GM12878 (cell line): ENCODE measurements at regions of chr13 and their contacts with region 1.

Region 1: GRCh38 chr13:80454245-80454644 is 113.3 kb upstream of the SPRY2 start:
- DNase-seq: peak; percentile 34
- ATAC-seq: peak; percentile 85
- H3K4me3 ChIP-seq: no peak overlapping the region
- H3K27ac ChIP-seq: no peak overlapping the region
- H3K4me1 ChIP-seq: no peaks in the 10 kb centered on the region
- H3K27me3 ChIP-seq: no peaks in the 10 kb centered on the region
- CTCF ChIP-seq: no peak
- EP300 ChIP-seq: peak; percentile 88 to 92
- POLR2A ChIP-seq: no peak
- RAD21 ChIP-seq: no peak

Region 2: GRCh38 chr13:80224468-80224867 is 229.8 kb before region 1 on chr13:
- CTCF ChIA-PET with region 1: no interaction called
- POLR2A ChIA-PET with region 1: no interaction called
- RAD21 ChIA-PET with region 1: no interaction called
- SMC1A ChIA-PET with region 1: no interaction called
- in situ Hi-C with region 1: no loop called
- intact Hi-C with region 1: no loop called
- DNase-seq: no peak
- ATAC-seq: no peak
- H3K4me3 ChIP-seq: no peak overlapping the region
- H3K27ac ChIP-seq: no peak overlapping the region
- H3K4me1 ChIP-seq: no peaks in the 10 kb centered on the region
- H3K27me3 ChIP-seq: no peaks in the 10 kb centered on the region
- CTCF ChIP-seq: no peak
- EP300 ChIP-seq: no peak
- POLR2A ChIP-seq: no peak
- RAD21 ChIP-seq: no peak

Region 3: DNA sequence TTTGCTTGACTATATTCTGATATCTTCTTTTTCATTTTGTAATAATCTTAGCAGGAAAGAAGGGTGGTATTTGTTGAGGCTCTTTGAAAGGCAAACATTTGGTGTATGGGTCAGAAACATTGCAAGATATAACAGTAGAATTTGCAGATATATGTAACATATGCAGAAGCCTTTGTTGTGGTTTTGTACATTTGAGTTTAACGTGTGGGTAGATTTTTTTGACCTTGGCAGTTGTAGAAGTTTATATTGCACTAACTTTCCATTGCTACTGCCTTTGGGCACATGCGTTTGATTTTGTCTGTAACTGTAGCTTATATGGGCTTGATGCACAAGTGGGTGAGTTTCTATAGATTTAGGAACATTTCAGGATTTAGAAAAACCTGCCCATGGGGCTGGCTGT is 34.8 kb before region 1 on chr13:
- CTCF ChIA-PET with region 1: interaction called, 4 read pairs
- POLR2A ChIA-PET with region 1: interaction called, 5 read pairs
- RAD21 ChIA-PET with region 1: interaction called, 67 read pairs
- SMC1A ChIA-PET with region 1: interaction called, 707 read pairs
- in situ Hi-C with region 1: no loop called
- intact Hi-C with region 1: no loop called
- DNase-seq: no peak
- ATAC-seq: peak; percentile 63
- H3K4me3 ChIP-seq: no peak overlapping the region
- H3K27ac ChIP-seq: no peak overlapping the region
- H3K4me1 ChIP-seq: no peaks in the 10 kb centered on the region
- H3K27me3 ChIP-seq: no peaks in the 10 kb centered on the region
- CTCF ChIP-seq: no peak
- EP300 ChIP-seq: no peak
- POLR2A ChIP-seq: no peak
- RAD21 ChIP-seq: no peak

Region 4: DNA sequence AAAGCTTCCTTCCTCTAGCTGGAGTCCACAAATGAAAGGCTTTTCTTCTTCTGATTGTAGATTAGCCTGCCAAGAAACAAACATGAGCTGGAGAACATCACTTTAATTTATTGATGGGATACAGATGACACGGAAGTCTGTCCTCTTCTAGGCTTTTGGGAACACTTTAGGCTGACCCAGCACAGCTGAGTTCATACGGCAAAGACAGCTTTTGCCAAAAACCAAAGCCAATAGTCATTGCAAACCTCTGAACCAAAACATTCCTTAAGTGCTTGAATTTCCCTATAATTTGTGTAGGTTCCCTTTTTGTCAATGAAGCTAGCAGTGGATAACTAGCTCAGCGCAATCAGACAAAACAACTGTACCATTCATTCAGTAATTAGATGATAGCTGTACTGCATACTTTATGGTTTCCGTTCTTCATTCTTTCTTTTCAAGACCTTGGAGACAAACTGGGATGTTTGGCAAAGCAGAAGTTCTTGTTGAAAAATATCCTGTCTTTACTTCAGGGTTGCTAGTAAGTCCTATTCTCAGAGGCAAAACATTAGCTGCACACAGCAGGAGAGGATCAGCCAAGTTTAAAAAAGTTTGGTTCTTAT is 17.6 kb before region 1 on chr13:
- CTCF ChIA-PET with region 1: interaction called, 5 read pairs
- POLR2A ChIA-PET with region 1: interaction called, 11 read pairs
- RAD21 ChIA-PET with region 1: interaction called, 27 read pairs
- SMC1A ChIA-PET with region 1: interaction called, 31 read pairs
- in situ Hi-C with region 1: no loop called
- intact Hi-C with region 1: no loop called
- DNase-seq: no peak
- ATAC-seq: no peak
- H3K4me3 ChIP-seq: no peak overlapping the region
- H3K27ac ChIP-seq: no peak overlapping the region
- H3K4me1 ChIP-seq: no peaks in the 10 kb centered on the region
- H3K27me3 ChIP-seq: no peaks in the 10 kb centered on the region
- CTCF ChIP-seq: no peak
- EP300 ChIP-seq: no peak
- POLR2A ChIP-seq: no peak
- RAD21 ChIP-seq: no peak

Region 5: GRCh38 chr13:80469853-80470381 is 15.7 kb after region 1 on chr13:
- CTCF ChIA-PET with region 1: no interaction called
- POLR2A ChIA-PET with region 1: interaction called, 3 read pairs
- RAD21 ChIA-PET with region 1: interaction called, 22 read pairs
- SMC1A ChIA-PET with region 1: interaction called, 209 read pairs
- in situ Hi-C with region 1: no loop called
- intact Hi-C with region 1: no loop called
- DNase-seq: no peak
- ATAC-seq: no peak; the same call in 2 of the 3 replicates
- H3K4me3 ChIP-seq: no peak overlapping the region
- H3K27ac ChIP-seq: no peak overlapping the region
- H3K4me1 ChIP-seq: no peaks in the 10 kb centered on the region
- H3K27me3 ChIP-seq: no peaks in the 10 kb centered on the region
- CTCF ChIP-seq: no peak
- EP300 ChIP-seq: no peak
- POLR2A ChIP-seq: no peak
- RAD21 ChIP-seq: no peak

Region 6: GRCh38 chr13:80477661-80478443 is 23.6 kb after region 1 on chr13:
- CTCF ChIA-PET with region 1: interaction called, 12 read pairs
- POLR2A ChIA-PET with region 1: interaction called, 3 read pairs
- RAD21 ChIA-PET with region 1: interaction called, 22 read pairs
- SMC1A ChIA-PET with region 1: interaction called, 209 read pairs
- in situ Hi-C with region 1: no loop called
- intact Hi-C with region 1: no loop called
- DNase-seq: no peak
- ATAC-seq: peak; percentile 80
- H3K4me3 ChIP-seq: no peak overlapping the region
- H3K27ac ChIP-seq: no peak overlapping the region
- H3K4me1 ChIP-seq: no peaks in the 10 kb centered on the region
- H3K27me3 ChIP-seq: no peaks in the 10 kb centered on the region
- CTCF ChIP-seq: no peak
- EP300 ChIP-seq: peak; percentile 93 to 96
- POLR2A ChIP-seq: no peak
- RAD21 ChIP-seq: no peak